ENCODE measurements at regions of chr19 and their contacts with region 1.

Region 1: GRCh38 chr19:58439576-58440554 is at the start of gene ZNF132:
- DNase-seq: peak; percentile 84 to 98 (median 95)
- ATAC-seq: peak; percentile 95 to 96
- H3K4me3 Mint-ChIP-seq: peak within 1 kb of the TSS; percentile 93 to 100 (median 98)
- H3K27ac Mint-ChIP-seq: peak within 1 kb of the TSS; percentile 96 to 100 (median 98)
- H3K4me1 Mint-ChIP-seq: peaks cover 26 to 39% (median 33%) of the 10 kb centered on the region in 4 donors
- H3K27me3 Mint-ChIP-seq: peaks cover 0 to 2% (median 0%) of the 10 kb centered on the region in 5 donors
- polyA plus RNA-seq, gene ZNF132: 1.0 to 3.1 (median 2.0) TPM

Region 2: GRCh38 chr19:58326914-58327726 is 112.7 kb before region 1 on chr19 and contains the start of gene ZSCAN22:
- POLR2A ChIA-PET with region 1: no interaction called
- DNase-seq: peak; percentile 76 to 93 (median 82)
- ATAC-seq: peak; percentile 92 to 94
- H3K4me3 Mint-ChIP-seq: no peak within 1 kb of the TSS
- H3K27ac Mint-ChIP-seq: no peak within 1 kb of the TSS
- H3K4me1 Mint-ChIP-seq: peaks cover 0 to 14% (median 6%) of the 10 kb centered on the region in 4 donors
- H3K27me3 Mint-ChIP-seq: no peaks in the 10 kb centered on the region
- polyA plus RNA-seq, gene ZSCAN22: 0.69 to 3.3 (median 1.4) TPM

Region 3: GRCh38 chr19:58408152-58409009 is 31.5 kb before region 1 on chr19 and contains the start of gene ZNF584:
- POLR2A ChIA-PET with region 1: interaction called, 10 read pairs
- DNase-seq: peak; percentile 88 to 97 (median 92)
- ATAC-seq: peak; percentile 92 to 97
- H3K4me3 Mint-ChIP-seq: peak within 1 kb of the TSS; percentile 94 to 98 (median 96)
- H3K27ac Mint-ChIP-seq: peak within 1 kb of the TSS; percentile 72 to 98 (median 96)
- H3K4me1 Mint-ChIP-seq: peaks cover 25 to 41% (median 35%) of the 10 kb centered on the region in 4 donors
- H3K27me3 Mint-ChIP-seq: no peaks in the 10 kb centered on the region
- polyA plus RNA-seq, gene ZNF584: 6.3 to 6.5 (median 6.4) TPM

Region 4: DNA sequence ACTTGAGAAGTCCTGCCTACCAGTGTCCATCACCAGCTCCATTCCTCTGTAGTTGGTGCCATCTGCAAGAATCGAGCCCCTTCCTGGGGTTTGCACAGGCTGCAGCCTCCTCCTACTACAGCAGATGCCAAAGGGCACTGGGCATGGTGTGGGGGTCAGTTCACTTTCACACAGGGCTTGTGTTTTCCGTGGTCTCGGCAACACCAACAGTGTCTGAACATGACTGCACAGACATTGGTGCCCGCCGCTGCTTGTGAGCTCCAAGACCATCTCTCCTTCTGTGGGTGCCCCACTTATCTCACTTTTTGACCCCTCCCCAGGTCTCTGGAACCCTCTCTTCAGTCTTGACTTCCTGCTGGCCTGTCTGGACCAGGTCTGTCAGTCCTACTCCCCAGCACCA is 51.5 kb after region 1 on chr19:
- POLR2A ChIA-PET with region 1: no interaction called
- DNase-seq: no peak
- ATAC-seq: no peak
- H3K4me3 Mint-ChIP-seq: no peak overlapping the region
- H3K27ac Mint-ChIP-seq: peak overlapping the region in 3 of 10 donors; percentile 13 to 65 (median 43)
- H3K4me1 Mint-ChIP-seq: peaks cover 0 to 5% (median 2%) of the 10 kb centered on the region in 4 donors
- H3K27me3 Mint-ChIP-seq: no peaks in the 10 kb centered on the region

Measured in naive thymus-derived CD8-positive, alpha-beta T cell (primary cell).